ENCODE measurements at regions of chr3 and their contacts with region 1.

Region 1: DNA sequence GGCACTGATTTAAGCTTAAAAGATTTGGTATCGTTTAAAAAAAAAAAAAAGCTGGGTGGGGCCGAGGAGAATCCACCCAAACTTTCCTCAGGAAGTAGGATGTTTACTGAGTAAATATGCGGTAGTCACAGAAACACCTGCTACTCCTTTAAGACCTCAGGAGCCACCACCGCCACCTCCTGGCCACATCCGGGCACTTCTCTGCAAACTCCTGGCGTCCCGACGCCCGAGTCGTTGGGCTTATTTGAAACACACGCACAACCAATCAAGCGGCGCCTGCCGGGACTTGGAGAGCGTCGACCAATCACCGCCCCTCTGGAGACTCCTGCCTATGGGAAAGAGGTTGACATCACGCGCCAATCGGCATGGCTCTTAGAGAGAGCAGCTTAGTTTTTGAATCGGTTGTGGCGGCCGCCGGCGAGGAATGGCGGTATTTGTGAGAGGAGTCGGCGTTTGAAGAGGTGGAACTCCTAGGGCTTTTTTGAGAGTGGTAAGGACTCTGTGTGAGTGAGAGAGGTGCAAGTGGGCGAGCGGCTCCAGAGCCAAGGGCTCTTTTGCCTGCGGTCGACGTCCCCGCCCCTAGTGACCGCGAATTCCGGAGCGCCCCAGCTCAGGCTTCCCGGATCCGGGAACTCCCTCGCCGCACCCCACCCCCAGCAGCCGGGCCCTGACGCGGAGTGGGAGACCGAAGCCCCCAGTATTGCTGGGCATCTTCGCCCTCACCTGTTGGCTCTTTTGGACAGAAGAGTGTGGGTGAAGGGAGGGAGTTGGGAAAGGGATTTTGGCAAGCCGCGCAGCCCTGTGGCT is at the start of gene ECT2:
- DNase-seq: peak; percentile 98 to 100
- ATAC-seq: peak; percentile 94 to 97
- H3K4me3 ChIP-seq: peak within 1 kb of the TSS; percentile 86
- H3K27ac ChIP-seq: peak within 1 kb of the TSS; percentile 91 to 98
- H3K4me1 ChIP-seq: peaks cover 64% of the 10 kb centered on the region
- CTCF ChIP-seq: peak; percentile 70
- EP300 ChIP-seq: peak; percentile 25 to 77; a peak in 3 of 5 replicates
- POLR2A ChIP-seq: peak; percentile 45
- RAD21 ChIP-seq: peak; percentile 73 to 86
- polyA plus RNA-seq, gene ECT2: 132 and 187 TPM in 2 replicates

Region 2: GRCh38 chr3:172666873-172667694 is 83.5 kb before region 1 on chr3:
- CTCF ChIA-PET with region 1: interaction called, 41 read pairs
- POLR2A ChIA-PET with region 1: no interaction called
- DNase-seq: peak; percentile 61 to 81
- ATAC-seq: peak; percentile 100
- H3K4me3 ChIP-seq: no peak overlapping the region
- H3K27ac ChIP-seq: peak overlapping the region; percentile 23 to 73; a peak in 4 of 6 replicates
- H3K4me1 ChIP-seq: peaks cover 5% of the 10 kb centered on the region; the same call in 2 of the 3 replicates
- CTCF ChIP-seq: peak; percentile 82
- EP300 ChIP-seq: no peak
- POLR2A ChIP-seq: no peak
- RAD21 ChIP-seq: peak; percentile 88 to 93

Region 3: GRCh38 chr3:172673210-172673679 is 77.3 kb before region 1 on chr3:
- CTCF ChIA-PET with region 1: interaction called, 41 read pairs
- POLR2A ChIA-PET with region 1: interaction called, 9 read pairs
- DNase-seq: peak; percentile 51 to 85
- ATAC-seq: peak; percentile 86 to 96; a peak in 5 of 6 replicates
- H3K4me3 ChIP-seq: no peak overlapping the region
- H3K27ac ChIP-seq: peak overlapping the region; percentile 54 to 77
- H3K4me1 ChIP-seq: peaks cover 35% of the 10 kb centered on the region
- CTCF ChIP-seq: peak; percentile 85
- EP300 ChIP-seq: no peak
- POLR2A ChIP-seq: no peak
- RAD21 ChIP-seq: peak; percentile 79 to 81

Region 4: DNA sequence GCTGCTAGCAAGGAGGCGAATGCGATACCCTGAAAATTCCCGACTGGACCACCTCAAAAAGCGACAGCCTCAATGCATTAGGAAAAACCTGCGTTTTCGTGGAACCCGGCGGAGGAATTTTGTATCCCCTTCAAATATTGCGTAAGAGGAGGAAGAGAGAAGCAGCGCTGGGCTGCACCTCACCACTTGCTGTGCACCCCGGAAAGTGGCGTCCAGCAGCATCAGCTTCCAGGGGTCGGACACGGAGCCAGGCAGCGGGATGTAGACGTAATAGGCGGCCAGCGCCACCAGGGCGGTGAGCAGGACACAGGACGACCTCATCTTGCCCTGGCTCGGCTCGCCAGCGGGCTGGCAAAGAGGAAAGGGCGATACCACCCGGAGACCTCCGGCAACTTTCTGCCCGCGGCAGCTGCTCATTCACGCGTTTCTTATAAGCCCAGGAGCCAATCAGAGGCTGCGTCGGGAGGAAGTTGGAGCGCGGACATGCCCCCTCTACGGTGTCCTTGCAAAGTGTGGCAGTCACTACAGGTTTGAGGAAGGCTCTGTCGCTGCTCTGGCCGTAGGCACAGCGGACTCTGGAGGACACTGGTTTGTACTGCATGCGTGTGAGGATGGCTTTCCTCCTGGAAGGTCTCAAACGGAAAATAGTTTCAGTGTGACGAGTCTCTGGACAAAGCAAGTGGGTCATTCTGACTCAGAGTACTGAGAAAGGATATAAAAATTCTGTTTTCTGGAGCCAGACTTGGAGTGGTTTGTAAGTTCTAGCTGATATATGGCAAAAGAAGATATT is 39.7 kb before region 1 on chr3 and contains the start of gene NCEH1:
- CTCF ChIA-PET with region 1: interaction called, 83 read pairs
- POLR2A ChIA-PET with region 1: interaction called, 66 read pairs
- DNase-seq: peak; percentile 95 to 98
- ATAC-seq: peak; percentile 97 to 98
- H3K4me3 ChIP-seq: peak within 1 kb of the TSS; percentile 92
- H3K27ac ChIP-seq: peak within 1 kb of the TSS; percentile 86 to 93
- H3K4me1 ChIP-seq: peaks cover 38% of the 10 kb centered on the region
- CTCF ChIP-seq: peak; percentile 87
- EP300 ChIP-seq: peak in 1 of 2 experiments; percentile 30; a peak in 1 of 5 replicates
- POLR2A ChIP-seq: peak; percentile 97
- RAD21 ChIP-seq: peak; percentile 76 to 84
- polyA plus RNA-seq, gene NCEH1: 32.2 and 33.2 TPM in 2 replicates

Region 5: DNA sequence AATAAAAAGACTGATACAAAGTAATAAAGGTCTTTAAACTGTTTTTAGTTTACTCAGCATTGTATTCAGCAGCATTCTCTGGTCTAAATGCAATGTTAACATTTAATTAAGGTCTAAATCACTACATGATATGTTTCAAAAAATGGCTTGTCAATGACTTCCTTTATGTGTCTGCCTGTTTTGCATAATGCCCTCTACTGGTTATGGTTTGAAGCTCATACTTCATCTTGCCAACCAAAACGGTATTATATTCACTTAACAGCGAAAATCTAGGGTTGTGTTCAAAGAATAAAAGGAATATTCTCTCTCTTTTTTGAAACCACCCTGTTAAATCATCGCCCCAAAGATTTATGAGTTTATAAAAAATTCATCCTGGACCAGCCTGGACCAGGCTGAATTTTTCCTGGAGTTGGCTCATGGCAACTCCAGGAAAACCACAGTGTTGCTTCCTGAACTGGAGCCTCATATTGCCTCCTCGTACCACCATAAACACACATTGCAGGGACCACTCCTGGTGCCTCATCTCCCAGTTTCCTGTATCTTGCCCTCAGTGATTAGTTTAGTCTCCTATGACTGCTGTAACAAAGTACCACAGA is 33.0 kb before region 1 on chr3:
- CTCF ChIA-PET with region 1: interaction called, 83 read pairs
- POLR2A ChIA-PET with region 1: interaction called, 6 read pairs
- DNase-seq: peak; percentile 52 to 56
- ATAC-seq: peak; percentile 77 to 89; a peak in 5 of 6 replicates
- H3K4me3 ChIP-seq: no peak overlapping the region
- H3K27ac ChIP-seq: peak overlapping the region in 1 of 2 experiments; percentile 45; a peak in 2 of 6 replicates
- H3K4me1 ChIP-seq: no peaks in the 10 kb centered on the region
- CTCF ChIP-seq: peak; percentile 49
- EP300 ChIP-seq: no peak
- POLR2A ChIP-seq: no peak
- RAD21 ChIP-seq: peak in 1 of 2 experiments; percentile 33; a peak in 2 of 5 replicates

Region 6: GRCh38 chr3:172726382-172726781 is 24.2 kb before region 1 on chr3:
- CTCF ChIA-PET with region 1: interaction called, 14 read pairs
- POLR2A ChIA-PET with region 1: interaction called, 3 read pairs
- DNase-seq: no peak
- ATAC-seq: no peak
- H3K4me3 ChIP-seq: no peak overlapping the region
- H3K27ac ChIP-seq: no peak overlapping the region
- H3K4me1 ChIP-seq: no peaks in the 10 kb centered on the region
- CTCF ChIP-seq: no peak
- EP300 ChIP-seq: no peak
- POLR2A ChIP-seq: no peak
- RAD21 ChIP-seq: no peak

Region 7: GRCh38 chr3:172766241-172766640 is 15.7 kb after region 1 on chr3:
- CTCF ChIA-PET with region 1: interaction called, 10 read pairs
- POLR2A ChIA-PET with region 1: no interaction called
- DNase-seq: no peak
- ATAC-seq: no peak
- H3K4me3 ChIP-seq: no peak overlapping the region
- H3K27ac ChIP-seq: no peak overlapping the region
- H3K4me1 ChIP-seq: no peaks in the 10 kb centered on the region; the same call in 2 of the 3 replicates
- CTCF ChIP-seq: no peak
- EP300 ChIP-seq: no peak
- POLR2A ChIP-seq: no peak
- RAD21 ChIP-seq: no peak

Measured in A549 (cell line).